ENCODE measurements at regions of chr5 and their contacts with region 1.

Region 1: GRCh38 chr5:142065273-142065672 is 43.3 kb upstream of the NDFIP1 start:
- DNase-seq: no peak
- H3K4me3 ChIP-seq: no peak overlapping the region
- H3K27ac ChIP-seq: no peak overlapping the region
- H3K4me1 ChIP-seq: no peaks in the 10 kb centered on the region
- H3K27me3 ChIP-seq: no peaks in the 10 kb centered on the region
- CTCF ChIP-seq: no peak
- POLR2A ChIP-seq: no peak

Region 2: DNA sequence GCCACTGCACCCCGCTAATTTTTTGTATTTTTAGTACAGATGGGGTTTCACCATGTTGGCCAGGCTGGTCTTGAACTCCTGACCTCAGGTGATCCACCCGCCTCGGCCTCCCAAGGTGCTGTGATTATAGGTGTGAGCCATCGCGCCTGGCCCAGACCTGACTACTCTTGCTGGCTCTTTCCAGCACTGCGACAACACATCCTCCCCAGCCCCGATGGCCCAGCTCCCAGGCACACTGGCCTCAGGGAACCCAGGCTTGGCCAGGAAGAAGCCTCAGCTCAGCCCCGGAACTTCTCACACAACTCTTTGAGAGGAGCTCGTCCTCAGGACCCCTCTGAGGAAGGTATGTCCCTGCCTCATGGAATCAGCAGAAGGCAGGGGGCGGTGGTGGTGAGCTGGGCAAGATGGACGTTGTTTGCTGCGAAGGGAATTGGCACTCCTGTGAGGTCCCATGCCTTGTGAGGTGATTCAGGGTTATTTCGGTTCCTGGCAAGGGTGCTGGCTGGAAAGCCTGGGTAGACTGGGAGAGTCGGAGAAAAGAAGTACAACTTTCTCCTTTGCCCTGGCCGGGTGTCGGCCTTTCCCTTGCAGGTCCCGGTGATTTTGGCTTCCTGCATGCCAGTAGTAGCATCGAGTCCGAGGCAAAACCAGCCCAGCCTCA is 135.7 kb before region 1 on chr5:
- intact Hi-C with region 1: loop called (anchors 5 kb)
- DNase-seq: no peak
- H3K4me3 ChIP-seq: no peak overlapping the region
- H3K27ac ChIP-seq: no peak overlapping the region
- H3K4me1 ChIP-seq: no peaks in the 10 kb centered on the region
- H3K27me3 ChIP-seq: no peaks in the 10 kb centered on the region
- CTCF ChIP-seq: no peak
- POLR2A ChIP-seq: no peak

Region 3: GRCh38 chr5:142166754-142167153 is 101.5 kb after region 1 on chr5:
- intact Hi-C with region 1: no loop called
- DNase-seq: no peak
- H3K4me3 ChIP-seq: no peak overlapping the region
- H3K27ac ChIP-seq: no peak overlapping the region
- H3K4me1 ChIP-seq: no peaks in the 10 kb centered on the region
- H3K27me3 ChIP-seq: no peaks in the 10 kb centered on the region
- CTCF ChIP-seq: no peak
- POLR2A ChIP-seq: no peak